ENCODE measurements at regions of chr12 and their contacts with region 1.

Region 1: DNA sequence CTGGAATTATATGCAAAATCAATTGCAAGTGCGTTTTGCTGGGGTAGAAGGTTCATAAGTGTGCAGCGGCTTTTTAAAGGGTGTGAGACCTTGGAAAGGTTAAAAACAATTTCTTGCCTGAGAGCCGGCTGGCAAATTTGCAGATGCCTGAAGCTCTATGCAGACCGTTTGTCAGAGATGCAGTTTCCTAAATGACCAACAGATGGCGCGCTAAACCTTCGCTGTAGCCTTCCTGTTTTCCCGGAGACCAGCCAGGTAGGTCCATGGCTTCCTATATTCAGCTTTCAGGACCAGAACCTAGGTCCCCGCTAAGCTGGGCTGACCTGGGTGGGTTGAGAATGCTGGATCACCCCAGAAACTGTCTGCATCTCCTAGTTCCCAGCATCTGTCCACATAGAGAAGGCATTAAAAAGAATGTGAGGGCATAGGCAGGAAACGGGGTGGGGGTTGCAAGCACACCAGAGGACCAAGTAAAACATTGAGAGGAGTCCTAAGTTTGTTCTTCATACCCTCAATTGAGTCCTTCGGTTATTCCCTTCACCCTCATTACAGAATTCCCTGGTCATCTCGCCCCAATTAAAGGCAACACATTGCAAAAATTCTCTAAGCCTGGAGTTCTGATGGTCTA is 5.7 kb upstream of the NOS1 start:
- DNase-seq: peak; percentile 71
- H3K4me3 Mint-ChIP-seq: no peak overlapping the region
- H3K27ac Mint-ChIP-seq: no peak overlapping the region
- H3K4me1 Mint-ChIP-seq: no peaks in the 10 kb centered on the region
- H3K27me3 Mint-ChIP-seq: peaks cover 25% of the 10 kb centered on the region

Region 2: DNA sequence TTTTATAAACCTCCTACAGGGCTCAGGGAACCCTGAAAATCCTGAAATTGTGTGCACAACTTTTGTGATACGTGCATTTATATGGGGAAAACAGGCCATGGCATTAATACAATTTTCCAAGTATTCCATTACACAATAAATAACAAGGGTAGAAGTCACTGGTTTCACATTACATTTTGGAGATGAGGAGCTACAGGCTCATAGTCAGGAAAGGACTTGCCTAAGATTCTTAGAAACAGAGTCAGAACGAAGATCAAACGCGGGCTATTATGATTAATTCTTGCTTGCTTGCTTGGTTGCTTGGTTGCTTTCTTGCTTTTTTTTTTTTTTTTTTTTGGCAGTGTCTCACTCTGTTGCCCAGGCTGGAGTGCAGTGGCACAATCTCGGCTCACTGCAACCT is 22.4 kb before region 1 on chr12:
- CTCF ChIA-PET with region 1: no interaction called
- DNase-seq: no peak
- H3K4me3 Mint-ChIP-seq: no peak overlapping the region
- H3K27ac Mint-ChIP-seq: no peak overlapping the region
- H3K4me1 Mint-ChIP-seq: peaks cover 4% of the 10 kb centered on the region
- H3K27me3 Mint-ChIP-seq: no peaks in the 10 kb centered on the region

Region 3: GRCh38 chr12:117356048-117356447 is 11.1 kb before region 1 on chr12:
- CTCF ChIA-PET with region 1: interaction called, 17 read pairs
- DNase-seq: no peak
- H3K4me3 Mint-ChIP-seq: no peak overlapping the region
- H3K27ac Mint-ChIP-seq: no peak overlapping the region
- H3K4me1 Mint-ChIP-seq: no peaks in the 10 kb centered on the region
- H3K27me3 Mint-ChIP-seq: peaks cover 31% of the 10 kb centered on the region

Region 4: DNA sequence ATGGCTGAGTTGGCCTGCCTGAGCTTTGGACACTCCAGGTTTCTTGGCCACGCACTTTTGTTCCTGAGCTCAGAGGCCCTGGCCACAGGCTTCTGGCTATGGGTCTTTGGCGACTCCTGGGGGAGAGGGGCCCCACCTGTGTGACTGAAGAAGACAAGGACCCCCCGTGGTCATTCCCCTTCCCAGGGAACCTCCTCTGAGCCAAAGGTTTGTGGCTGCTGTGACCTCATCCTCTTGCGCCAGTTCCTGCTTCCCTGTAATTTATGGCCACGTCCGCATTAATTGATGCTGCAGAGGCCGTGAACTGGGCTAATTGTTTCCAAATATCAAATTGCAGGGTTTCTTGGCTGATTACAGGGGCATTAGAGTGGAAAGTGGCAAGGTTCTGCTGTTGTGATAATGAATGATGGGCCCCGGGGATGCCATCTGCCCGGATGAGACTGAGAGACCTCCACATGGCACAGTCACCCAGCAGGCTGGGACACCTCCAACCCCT is 21.9 kb after region 1 on chr12:
- CTCF ChIA-PET with region 1: no interaction called
- DNase-seq: no peak
- H3K4me3 Mint-ChIP-seq: no peak overlapping the region
- H3K27ac Mint-ChIP-seq: no peak overlapping the region
- H3K4me1 Mint-ChIP-seq: no peaks in the 10 kb centered on the region
- H3K27me3 Mint-ChIP-seq: no peaks in the 10 kb centered on the region

Region 5: DNA sequence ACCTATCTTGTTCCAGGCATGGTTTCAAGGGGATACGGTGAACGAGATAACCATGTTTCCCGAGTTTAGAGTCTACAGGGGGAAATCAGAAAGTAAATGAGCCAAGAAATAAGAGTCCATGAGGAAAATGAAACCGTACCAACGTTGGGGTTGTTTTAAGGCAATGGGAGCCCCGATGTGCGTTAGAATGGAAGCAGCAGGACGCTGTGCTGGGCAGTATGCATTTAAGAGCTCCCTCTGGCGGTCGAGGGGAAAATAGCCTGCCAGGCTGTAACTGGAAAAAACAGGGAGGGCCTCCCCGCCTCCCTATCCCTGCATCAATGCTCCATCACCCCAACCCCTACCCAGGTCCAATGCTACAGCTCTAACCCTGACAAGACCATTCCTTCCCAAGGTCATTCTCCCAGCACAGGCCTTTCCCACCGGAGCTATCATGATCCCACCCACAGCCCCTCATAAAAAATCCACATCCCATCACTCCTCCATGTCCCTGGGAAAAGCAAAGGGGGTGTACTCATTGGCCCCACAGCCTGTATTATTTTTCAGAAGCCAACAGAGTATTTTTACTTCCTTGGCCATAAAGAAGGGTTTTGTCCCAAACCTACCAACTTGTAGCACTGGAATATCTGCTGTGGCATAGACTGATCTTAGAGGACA is 220.6 kb after region 1 on chr12:
- CTCF ChIA-PET with region 1: interaction called, 35 read pairs
- DNase-seq: peak; percentile 56
- H3K4me3 Mint-ChIP-seq: no peak overlapping the region
- H3K27ac Mint-ChIP-seq: no peak overlapping the region
- H3K4me1 Mint-ChIP-seq: no peaks in the 10 kb centered on the region
- H3K27me3 Mint-ChIP-seq: no peaks in the 10 kb centered on the region